Heart right ventricle (tissue), 16 donors: ENCODE measurements at regions of chr7 and their contacts with region 1.

Region 1: DNA sequence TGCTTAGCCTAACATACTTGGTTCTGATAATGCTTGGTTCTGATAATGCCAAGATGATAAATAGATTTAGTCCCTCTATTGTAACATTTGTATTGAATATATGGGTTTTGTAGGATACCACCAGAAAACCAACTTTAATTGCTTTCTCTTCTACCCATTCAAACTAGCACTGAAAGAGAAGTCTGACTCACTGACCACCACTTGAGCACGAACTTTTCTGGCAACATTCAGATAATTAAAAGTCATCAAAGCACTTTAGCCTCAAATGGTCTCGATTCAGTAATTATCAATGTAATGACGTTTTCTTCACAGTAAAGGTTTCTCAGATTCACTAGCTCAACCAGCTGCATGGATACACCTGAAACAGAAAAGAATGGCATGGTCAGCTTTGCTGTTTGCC is 63.0 kb downstream of the HDAC9 start:
- DNase-seq: no peak
- ATAC-seq: no peak
- H3K4me3 ChIP-seq: no peak overlapping the region
- H3K27ac ChIP-seq: no peak overlapping the region
- H3K4me1 ChIP-seq: peaks cover 0 to 50% (median 29%) of the 10 kb centered on the region in 9 donors
- H3K27me3 ChIP-seq: no peaks in the 10 kb centered on the region
- CTCF ChIP-seq: no peak

Region 2: GRCh38 chr7:18414885-18415284 is 143.6 kb before region 1 on chr7:
- intact Hi-C with region 1: loop called in 1 of 10 experiments (anchors 1 kb)
- DNase-seq: no peak
- ATAC-seq: no peak
- H3K4me3 ChIP-seq: no peak overlapping the region
- H3K27ac ChIP-seq: no peak overlapping the region
- H3K4me1 ChIP-seq: no peaks in the 10 kb centered on the region
- H3K27me3 ChIP-seq: no peaks in the 10 kb centered on the region
- CTCF ChIP-seq: no peak

Region 3: GRCh38 chr7:18445916-18446520 is 112.5 kb before region 1 on chr7:
- intact Hi-C with region 1: no loop called
- DNase-seq: no peak
- ATAC-seq: peak in 2 of 8 donors; percentile 46 to 57
- H3K4me3 ChIP-seq: no peak overlapping the region
- H3K27ac ChIP-seq: peak overlapping the region in 2 of 10 donors; percentile 11 to 21
- H3K4me1 ChIP-seq: peaks cover 0 to 14% (median 0%) of the 10 kb centered on the region in 9 donors
- H3K27me3 ChIP-seq: no peaks in the 10 kb centered on the region
- CTCF ChIP-seq: no peak

Region 4: DNA sequence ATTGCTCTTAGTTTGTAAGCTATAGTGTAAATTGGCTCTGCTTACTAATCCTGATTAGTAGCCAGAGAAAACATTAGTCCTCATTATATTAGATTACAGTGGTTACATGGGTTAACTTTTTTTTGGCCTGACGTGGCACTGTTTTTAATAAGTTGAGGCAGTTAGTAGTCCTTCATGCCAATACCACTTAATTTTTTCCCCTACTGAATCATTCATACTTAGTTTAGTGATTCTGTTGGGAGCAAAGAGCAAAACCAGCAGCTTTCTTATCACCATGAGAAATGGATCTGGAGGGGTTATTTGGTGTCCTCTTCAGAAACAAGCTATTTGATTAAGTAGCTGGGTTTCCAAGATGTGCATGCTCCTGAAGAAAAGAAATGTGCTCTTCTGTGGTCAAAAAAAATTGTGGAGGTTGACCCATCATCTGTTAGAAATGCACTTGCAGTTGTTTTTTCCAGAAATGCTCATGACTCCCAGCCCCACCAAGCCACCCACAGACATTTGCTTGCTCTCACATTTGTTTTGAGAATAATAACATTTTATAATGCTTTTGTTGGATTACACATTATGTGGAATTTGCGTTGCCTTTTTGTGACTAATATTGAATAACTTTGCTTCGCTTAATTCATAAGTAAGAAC is 195.6 kb after region 1 on chr7:
- intact Hi-C with region 1: no loop called
- DNase-seq: no peak
- ATAC-seq: no peak
- H3K4me3 ChIP-seq: no peak overlapping the region
- H3K27ac ChIP-seq: no peak overlapping the region
- H3K4me1 ChIP-seq: no peaks in the 10 kb centered on the region
- H3K27me3 ChIP-seq: no peaks in the 10 kb centered on the region
- CTCF ChIP-seq: no peak